ENCODE measurements at regions of chr13 and their contacts with region 1.

Region 1: DNA sequence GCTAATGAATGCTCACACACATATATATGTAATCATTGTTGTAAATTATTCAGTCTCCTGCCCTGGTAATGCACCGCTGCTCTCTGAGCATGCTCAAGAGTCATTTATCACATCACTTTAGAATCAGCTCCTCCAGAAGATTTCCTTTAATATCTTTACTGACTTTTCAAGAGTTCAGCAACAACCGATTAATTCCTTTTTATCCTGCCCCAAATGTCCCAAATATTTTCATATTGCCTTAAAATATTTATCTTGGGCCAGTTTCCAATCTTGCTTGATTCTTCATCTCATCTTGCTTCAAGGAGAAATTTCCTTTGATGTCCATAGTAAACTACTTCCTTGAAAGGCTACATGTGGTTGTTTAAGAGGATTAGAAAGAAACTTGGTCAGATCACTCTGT is 132.5 kb downstream of the NHLRC3 start:
- DNase-seq: no peak
- ATAC-seq: no peak
- H3K4me3 ChIP-seq: no peak overlapping the region
- H3K4me3 Mint-ChIP-seq: no peak overlapping the region
- H3K27ac ChIP-seq: no peak overlapping the region
- H3K27ac Mint-ChIP-seq: no peak overlapping the region
- H3K4me1 ChIP-seq: no peaks in the 10 kb centered on the region
- H3K4me1 Mint-ChIP-seq: no peaks in the 10 kb centered on the region
- H3K27me3 ChIP-seq: no peaks in the 10 kb centered on the region
- H3K27me3 Mint-ChIP-seq: peaks cover 14 to 17% of the 10 kb centered on the region in 2 donors

Region 2: GRCh38 chr13:38880397-38880796 is 290.3 kb before region 1 on chr13:
- CTCF ChIA-PET with region 1: no interaction called
- POLR2A ChIA-PET with region 1: interaction called in 1 of 2 experiments, 10 read pairs
- DNase-seq: no peak
- ATAC-seq: no peak
- H3K4me3 ChIP-seq: no peak overlapping the region
- H3K4me3 Mint-ChIP-seq: no peak overlapping the region
- H3K27ac ChIP-seq: no peak overlapping the region
- H3K27ac Mint-ChIP-seq: no peak overlapping the region
- H3K4me1 ChIP-seq: no peaks in the 10 kb centered on the region
- H3K4me1 Mint-ChIP-seq: no peaks in the 10 kb centered on the region
- H3K27me3 ChIP-seq: no peaks in the 10 kb centered on the region
- H3K27me3 Mint-ChIP-seq: peaks cover 2 to 18% of the 10 kb centered on the region in 2 donors

Measured in T-cell (primary cell).